ENCODE measurements at regions of chr9 and their contacts with region 1.

Region 1: GRCh38 chr9:15510789-15511575 is at the start of gene PSIP1:
- DNase-seq: peak; percentile 94
- H3K4me3 Mint-ChIP-seq: peak within 1 kb of the TSS; percentile 88
- H3K27ac Mint-ChIP-seq: peak within 1 kb of the TSS; percentile 100
- H3K4me1 Mint-ChIP-seq: peaks cover 50% of the 10 kb centered on the region
- H3K27me3 Mint-ChIP-seq: no peaks in the 10 kb centered on the region
- total RNA-seq, gene PSIP1: 132 to 134 TPM

Region 2: GRCh38 chr9:14322211-14323082 is 1188.5 kb before region 1 on chr9:
- CTCF ChIA-PET with region 1: no interaction called
- POLR2A ChIA-PET with region 1: no interaction called
- intact Hi-C with region 1: loop called (anchors 10 kb)
- DNase-seq: peak; percentile 88
- H3K4me3 Mint-ChIP-seq: peak overlapping the region; percentile 75
- H3K27ac Mint-ChIP-seq: peak overlapping the region; percentile 49
- H3K4me1 Mint-ChIP-seq: peaks cover 23% of the 10 kb centered on the region
- H3K27me3 Mint-ChIP-seq: peaks cover 36% of the 10 kb centered on the region

Region 3: GRCh38 chr9:15227491-15227890 is 283.5 kb before region 1 on chr9:
- CTCF ChIA-PET with region 1: no interaction called
- POLR2A ChIA-PET with region 1: no interaction called
- intact Hi-C with region 1: no loop called
- DNase-seq: no peak
- H3K4me3 Mint-ChIP-seq: no peak overlapping the region
- H3K27ac Mint-ChIP-seq: peak overlapping the region; percentile 51
- H3K4me1 Mint-ChIP-seq: peaks cover 48% of the 10 kb centered on the region
- H3K27me3 Mint-ChIP-seq: no peaks in the 10 kb centered on the region

Region 4: DNA sequence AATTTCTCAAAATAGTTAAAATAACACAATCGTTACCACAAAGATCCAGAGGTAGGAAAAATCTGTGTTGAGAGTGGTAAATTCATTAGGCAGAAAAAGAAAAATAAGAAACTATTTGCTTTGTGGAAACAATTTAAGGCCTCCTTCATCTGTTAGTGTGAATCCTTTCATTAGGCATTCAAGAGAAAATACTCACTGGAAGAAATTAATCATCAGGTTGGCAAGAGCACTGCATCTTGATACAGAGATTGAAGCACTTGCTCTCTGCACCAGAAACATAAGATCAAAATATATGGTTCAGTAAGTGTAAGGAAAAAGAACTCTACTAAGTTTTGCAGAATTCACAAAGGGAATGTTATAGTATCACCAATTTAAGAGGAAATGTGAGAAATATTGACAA is 248.4 kb before region 1 on chr9:
- CTCF ChIA-PET with region 1: no interaction called
- POLR2A ChIA-PET with region 1: no interaction called
- intact Hi-C with region 1: no loop called
- DNase-seq: no peak
- H3K4me3 Mint-ChIP-seq: no peak overlapping the region
- H3K27ac Mint-ChIP-seq: no peak overlapping the region
- H3K4me1 Mint-ChIP-seq: peaks cover 8% of the 10 kb centered on the region
- H3K27me3 Mint-ChIP-seq: no peaks in the 10 kb centered on the region

Region 5: GRCh38 chr9:15295761-15296405 is 215.1 kb before region 1 on chr9:
- CTCF ChIA-PET with region 1: no interaction called
- POLR2A ChIA-PET with region 1: interaction called, 8 read pairs
- intact Hi-C with region 1: loop called (anchors 2 kb)
- DNase-seq: peak; percentile 37
- H3K4me3 Mint-ChIP-seq: peak overlapping the region; percentile 69
- H3K27ac Mint-ChIP-seq: peak overlapping the region; percentile 97
- H3K4me1 Mint-ChIP-seq: peaks cover 84% of the 10 kb centered on the region
- H3K27me3 Mint-ChIP-seq: no peaks in the 10 kb centered on the region

Region 6: DNA sequence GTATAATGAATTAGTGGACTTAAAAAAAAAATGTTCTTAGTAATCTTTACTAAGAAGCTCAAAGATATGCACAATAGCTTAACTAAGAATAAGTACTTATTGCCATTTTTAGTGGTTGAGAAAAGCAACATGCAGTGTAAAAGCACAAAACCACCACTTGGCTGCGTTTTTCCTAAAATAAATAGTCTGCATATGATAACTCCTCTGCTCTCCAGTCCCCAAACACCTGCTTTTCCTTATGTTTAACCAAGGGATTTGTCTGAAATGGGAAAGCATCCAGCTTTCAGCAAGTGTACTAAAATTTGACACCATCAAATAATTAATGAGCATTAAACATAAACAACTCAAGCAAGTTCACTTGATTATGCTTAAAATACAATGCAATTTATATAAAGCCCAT is 41.6 kb before region 1 on chr9:
- CTCF ChIA-PET with region 1: interaction called, 5 read pairs
- POLR2A ChIA-PET with region 1: interaction called, 5 read pairs
- intact Hi-C with region 1: loop called (anchors 2 kb)
- DNase-seq: no peak
- H3K4me3 Mint-ChIP-seq: no peak overlapping the region
- H3K27ac Mint-ChIP-seq: no peak overlapping the region
- H3K4me1 Mint-ChIP-seq: peaks cover 17% of the 10 kb centered on the region
- H3K27me3 Mint-ChIP-seq: no peaks in the 10 kb centered on the region

Region 7: GRCh38 chr9:15485836-15486666 is 24.9 kb before region 1 on chr9:
- CTCF ChIA-PET with region 1: interaction called, 3 read pairs
- POLR2A ChIA-PET with region 1: interaction called, 3 read pairs
- intact Hi-C with region 1: loop called (anchors 2 kb)
- DNase-seq: no peak
- H3K4me3 Mint-ChIP-seq: no peak overlapping the region
- H3K27ac Mint-ChIP-seq: peak overlapping the region; percentile 49
- H3K4me1 Mint-ChIP-seq: peaks cover 37% of the 10 kb centered on the region
- H3K27me3 Mint-ChIP-seq: no peaks in the 10 kb centered on the region

Region 8: DNA sequence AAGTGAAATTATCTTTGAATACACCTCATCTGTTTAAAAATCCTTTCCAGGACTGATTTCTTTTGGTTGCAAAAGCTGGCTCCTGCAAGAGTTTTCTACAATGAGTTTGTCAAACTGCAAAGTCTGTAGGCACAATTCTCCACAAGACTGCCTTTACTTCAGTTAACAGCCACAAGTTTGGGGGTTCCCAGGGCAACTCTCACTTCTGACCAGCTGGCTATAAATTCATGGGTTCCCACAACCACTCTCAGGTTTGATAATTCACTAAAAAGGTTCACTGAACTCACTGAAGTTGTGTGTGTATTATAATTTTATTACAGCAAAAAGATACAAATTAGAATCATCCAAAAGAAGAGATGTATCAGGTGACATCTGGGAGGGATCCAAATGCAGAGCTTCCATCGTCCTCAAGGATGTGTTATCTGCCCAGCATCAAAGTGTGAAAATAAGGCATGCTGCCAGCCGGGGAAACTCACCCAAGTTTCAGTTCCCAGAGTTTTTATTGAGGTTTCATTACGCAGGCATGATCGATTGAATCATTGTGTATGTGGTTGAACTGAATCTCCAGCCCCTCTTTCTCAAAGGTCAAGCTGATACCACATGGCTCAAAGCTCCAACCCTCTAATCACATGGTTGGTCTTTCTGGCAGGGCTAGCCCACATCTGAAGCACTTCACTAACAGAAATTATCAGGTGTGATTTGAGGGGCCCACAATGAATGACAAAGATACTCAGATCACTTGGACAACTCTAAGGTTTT is 18.8 kb after region 1 on chr9:
- CTCF ChIA-PET with region 1: interaction called, 4 read pairs
- POLR2A ChIA-PET with region 1: interaction called, 3 read pairs
- intact Hi-C with region 1: loop called (anchors 1 kb)
- DNase-seq: no peak
- H3K4me3 Mint-ChIP-seq: no peak overlapping the region
- H3K27ac Mint-ChIP-seq: no peak overlapping the region
- H3K4me1 Mint-ChIP-seq: peaks cover 9% of the 10 kb centered on the region
- H3K27me3 Mint-ChIP-seq: no peaks in the 10 kb centered on the region

Region 9: GRCh38 chr9:15552636-15553527 is 41.9 kb after region 1 on chr9 and contains the start of gene CCDC171:
- CTCF ChIA-PET with region 1: interaction called, 13 read pairs
- POLR2A ChIA-PET with region 1: interaction called, 30 read pairs
- intact Hi-C with region 1: loop called (anchors 1 kb)
- DNase-seq: peak; percentile 92
- H3K4me3 Mint-ChIP-seq: peak within 1 kb of the TSS; percentile 79
- H3K27ac Mint-ChIP-seq: peak within 1 kb of the TSS; percentile 61
- H3K4me1 Mint-ChIP-seq: peaks cover 11% of the 10 kb centered on the region
- H3K27me3 Mint-ChIP-seq: no peaks in the 10 kb centered on the region
- total RNA-seq, gene CCDC171: 2.5 to 2.7 TPM

Region 10: DNA sequence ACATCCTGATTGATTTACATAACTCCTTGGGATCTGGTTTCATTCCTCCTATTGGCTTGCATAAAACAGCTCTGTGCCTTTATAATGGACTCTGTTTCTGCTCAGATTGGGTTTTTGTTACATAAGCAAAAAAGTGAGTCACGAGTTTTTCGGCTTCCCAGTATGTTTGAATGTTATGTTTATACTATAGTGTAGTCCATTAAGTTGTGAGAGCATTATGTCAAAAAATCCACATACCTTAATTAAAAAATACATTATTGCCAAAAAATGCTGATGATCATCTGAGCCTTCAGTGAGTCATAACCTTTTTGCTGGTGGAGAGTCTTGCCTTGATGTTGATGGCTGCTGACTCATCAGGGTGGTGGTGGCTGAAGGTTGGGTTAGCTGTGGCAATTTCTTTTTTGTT is 186.5 kb after region 1 on chr9:
- CTCF ChIA-PET with region 1: no interaction called
- POLR2A ChIA-PET with region 1: no interaction called
- intact Hi-C with region 1: no loop called
- DNase-seq: no peak
- H3K4me3 Mint-ChIP-seq: no peak overlapping the region
- H3K27ac Mint-ChIP-seq: no peak overlapping the region
- H3K4me1 Mint-ChIP-seq: no peaks in the 10 kb centered on the region
- H3K27me3 Mint-ChIP-seq: no peaks in the 10 kb centered on the region

Region 11: DNA sequence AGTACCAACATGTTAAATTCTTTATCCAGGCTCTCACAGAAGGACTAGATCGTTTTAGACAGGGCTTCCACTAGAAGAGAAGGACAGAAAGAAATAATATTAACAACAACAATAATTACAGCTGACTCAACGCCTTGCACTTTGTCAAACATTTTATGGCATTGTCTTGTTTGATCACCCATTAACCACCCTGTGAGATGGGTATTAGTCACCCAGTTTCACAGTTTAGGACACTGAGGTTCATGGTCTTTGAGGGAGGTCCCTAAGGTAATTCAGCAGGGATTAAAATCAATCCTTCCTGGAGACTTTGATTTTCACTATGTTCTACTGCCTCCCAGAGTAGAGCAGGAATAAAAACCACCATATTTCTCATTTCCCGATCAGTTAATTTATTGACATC is 1410.9 kb after region 1 on chr9:
- CTCF ChIA-PET with region 1: no interaction called
- POLR2A ChIA-PET with region 1: no interaction called
- intact Hi-C with region 1: no loop called
- DNase-seq: no peak
- H3K4me3 Mint-ChIP-seq: no peak overlapping the region
- H3K27ac Mint-ChIP-seq: no peak overlapping the region
- H3K4me1 Mint-ChIP-seq: no peaks in the 10 kb centered on the region
- H3K27me3 Mint-ChIP-seq: no peaks in the 10 kb centered on the region